Activated T-helper 1 cell treated with anti-CD3 and anti-CD28 coated beads, Interleukin-12 subunit alpha, Interleukin-12 subunit beta, Interleukin-2, Interleukin-4 antibody, amounts not matched to agents 30 ng/mL and 10 ng/mL and 1 ng/mL, durations not matched to agents 14 hours and 24 hours and 36 hours (primary cell): ENCODE measurements at regions of chr3 and their contacts with region 1.

Region 1: GRCh38 chr3:72818092-72818773 is 30.0 kb downstream of the SHQ1 start:
- DNase-seq: no peak
- H3K4me3 Mint-ChIP-seq: no peak overlapping the region
- H3K27ac Mint-ChIP-seq: no peak overlapping the region
- H3K4me1 Mint-ChIP-seq: peaks cover 36% of the 10 kb centered on the region
- H3K27me3 Mint-ChIP-seq: no peaks in the 10 kb centered on the region

Region 2: GRCh38 chr3:71875461-71875947 is 942.7 kb before region 1 on chr3:
- intact Hi-C with region 1: loop called (anchors 1 kb)
- DNase-seq: peak; percentile 67
- H3K4me3 Mint-ChIP-seq: no peak overlapping the region
- H3K27ac Mint-ChIP-seq: peak overlapping the region; percentile 59
- H3K4me1 Mint-ChIP-seq: peaks cover 38% of the 10 kb centered on the region
- H3K27me3 Mint-ChIP-seq: peaks cover 8% of the 10 kb centered on the region

Region 3: GRCh38 chr3:72134989-72135451 is 683.2 kb before region 1 on chr3:
- intact Hi-C with region 1: loop called (anchors 10 kb)
- DNase-seq: no peak
- H3K4me3 Mint-ChIP-seq: peak overlapping the region; percentile 60
- H3K27ac Mint-ChIP-seq: peak overlapping the region; percentile 89
- H3K4me1 Mint-ChIP-seq: peaks cover 48% of the 10 kb centered on the region
- H3K27me3 Mint-ChIP-seq: peaks cover 2% of the 10 kb centered on the region

Region 4: DNA sequence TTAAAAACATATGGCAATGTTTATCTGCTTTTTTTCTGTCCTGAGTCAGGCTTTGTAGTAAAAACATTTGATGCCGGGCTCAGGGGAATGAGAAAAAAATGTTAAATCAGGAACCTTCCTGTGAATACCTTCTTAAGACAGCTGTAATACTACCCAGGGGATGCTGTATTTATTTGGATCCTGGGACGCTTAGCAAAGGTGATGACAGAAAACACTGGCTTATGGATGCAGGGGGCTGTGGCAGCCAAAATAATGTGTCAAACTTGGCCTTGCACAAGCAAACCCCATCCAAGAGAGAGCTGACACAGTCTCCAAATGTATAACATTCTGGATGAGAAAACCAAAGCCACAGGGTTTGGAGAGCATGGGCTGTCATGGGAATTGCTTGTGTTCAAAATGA is 595.1 kb before region 1 on chr3:
- intact Hi-C with region 1: no loop called
- DNase-seq: no peak
- H3K4me3 Mint-ChIP-seq: no peak overlapping the region
- H3K27ac Mint-ChIP-seq: no peak overlapping the region
- H3K4me1 Mint-ChIP-seq: peaks cover 14% of the 10 kb centered on the region
- H3K27me3 Mint-ChIP-seq: peaks cover 4% of the 10 kb centered on the region

Region 5: DNA sequence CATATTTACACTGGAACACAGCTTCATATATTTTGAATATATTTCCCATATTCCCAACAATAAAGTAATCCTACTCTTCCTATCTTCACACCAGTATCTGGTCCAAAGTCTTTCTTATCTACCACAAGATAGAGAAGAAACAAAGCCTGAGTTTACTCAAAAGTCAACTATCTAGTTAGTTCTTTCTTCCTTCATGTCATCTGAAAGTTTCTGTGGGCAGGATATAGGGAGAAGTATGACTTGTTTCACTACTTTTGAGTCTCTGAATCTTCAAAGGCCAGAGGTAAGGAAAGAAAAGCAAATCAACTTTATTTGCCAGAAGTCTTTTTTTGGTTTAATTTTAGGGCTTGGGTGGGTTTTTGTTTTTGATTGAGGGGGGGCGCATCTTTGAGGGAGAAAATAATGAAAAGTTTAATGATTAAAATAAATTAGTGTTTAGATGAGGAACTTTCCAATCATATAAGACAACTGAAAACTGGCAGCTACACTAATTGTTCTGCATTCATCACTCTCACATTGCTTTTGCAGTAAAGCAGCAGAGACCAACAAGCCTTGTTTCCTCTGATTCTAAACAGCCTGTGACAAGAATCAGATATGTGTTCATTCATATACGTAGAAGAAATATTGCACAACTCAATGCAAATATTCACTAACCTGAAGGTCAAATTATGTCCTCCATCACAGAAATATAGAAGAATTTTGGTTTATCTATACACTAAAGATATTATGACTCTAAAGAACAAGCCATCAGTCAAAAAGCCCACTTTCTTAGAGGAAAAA is 391.4 kb before region 1 on chr3:
- intact Hi-C with region 1: loop called (anchors 5 kb)
- DNase-seq: no peak
- H3K4me3 Mint-ChIP-seq: peak overlapping the region; percentile 69
- H3K27ac Mint-ChIP-seq: peak overlapping the region; percentile 97
- H3K4me1 Mint-ChIP-seq: peaks cover 62% of the 10 kb centered on the region
- H3K27me3 Mint-ChIP-seq: no peaks in the 10 kb centered on the region

Region 6: GRCh38 chr3:72520690-72521308 is 297.4 kb before region 1 on chr3:
- intact Hi-C with region 1: loop called (anchors 1 kb)
- DNase-seq: peak; percentile 20
- H3K4me3 Mint-ChIP-seq: peak overlapping the region; percentile 16
- H3K27ac Mint-ChIP-seq: peak overlapping the region; percentile 88
- H3K4me1 Mint-ChIP-seq: peaks cover 56% of the 10 kb centered on the region
- H3K27me3 Mint-ChIP-seq: no peaks in the 10 kb centered on the region

Region 7: GRCh38 chr3:72756900-72757299 is 61.3 kb before region 1 on chr3:
- intact Hi-C with region 1: loop called (anchors 2 kb)
- DNase-seq: peak; percentile 38
- H3K4me3 Mint-ChIP-seq: peak overlapping the region; percentile 34
- H3K27ac Mint-ChIP-seq: peak overlapping the region; percentile 64
- H3K4me1 Mint-ChIP-seq: peaks cover 50% of the 10 kb centered on the region
- H3K27me3 Mint-ChIP-seq: no peaks in the 10 kb centered on the region